Activated naive CD4-positive, alpha-beta T cell treated with anti-CD3 and anti-CD28 coated beads for 36 hours (primary cell): ENCODE measurements at regions of chr13 and their contacts with region 1.

Region 1: DNA sequence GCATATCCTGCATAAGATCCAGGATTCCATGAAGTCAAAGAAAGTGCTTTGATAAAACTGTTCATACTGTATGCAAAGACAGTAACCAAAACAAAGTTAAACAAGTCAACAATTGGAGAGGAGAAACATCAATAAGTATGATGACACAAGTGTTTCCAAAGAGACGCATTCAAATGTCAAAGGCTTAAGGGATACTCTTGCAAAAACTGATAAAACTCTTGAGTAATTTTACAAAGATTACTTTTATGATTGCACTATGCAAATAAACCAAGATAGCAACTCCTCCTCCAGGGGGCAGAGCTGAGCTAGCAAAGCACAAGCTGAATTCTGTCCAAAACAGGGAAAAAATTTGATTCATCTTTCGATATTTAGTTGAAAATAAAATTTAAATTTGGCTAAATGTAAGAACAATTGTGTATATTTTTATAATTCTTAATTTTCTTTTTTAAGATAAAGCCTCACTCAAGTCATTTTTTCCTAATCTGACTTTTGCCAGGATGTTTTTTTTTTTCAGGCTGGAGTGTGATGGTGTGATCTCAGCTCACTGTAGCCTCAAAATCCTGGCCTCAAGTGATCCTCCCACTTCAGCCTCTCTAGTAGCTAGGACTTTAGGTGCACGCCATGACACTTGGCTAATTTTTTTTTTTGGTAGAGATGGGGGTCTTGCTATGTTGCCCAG is 84.0 kb downstream of the MZT1 start:
- DNase-seq: peak; percentile 77
- H3K4me3 Mint-ChIP-seq: no peak overlapping the region
- H3K27ac Mint-ChIP-seq: no peak overlapping the region
- H3K4me1 Mint-ChIP-seq: no peaks in the 10 kb centered on the region
- H3K27me3 Mint-ChIP-seq: peaks cover 9% of the 10 kb centered on the region

Region 2: GRCh38 chr13:71912524-71912923 is 730.9 kb before region 1 on chr13:
- CTCF ChIA-PET with region 1: no interaction called
- intact Hi-C with region 1: no loop called
- DNase-seq: no peak
- H3K4me3 Mint-ChIP-seq: no peak overlapping the region
- H3K27ac Mint-ChIP-seq: no peak overlapping the region
- H3K4me1 Mint-ChIP-seq: no peaks in the 10 kb centered on the region
- H3K27me3 Mint-ChIP-seq: peaks cover 2% of the 10 kb centered on the region

Region 3: DNA sequence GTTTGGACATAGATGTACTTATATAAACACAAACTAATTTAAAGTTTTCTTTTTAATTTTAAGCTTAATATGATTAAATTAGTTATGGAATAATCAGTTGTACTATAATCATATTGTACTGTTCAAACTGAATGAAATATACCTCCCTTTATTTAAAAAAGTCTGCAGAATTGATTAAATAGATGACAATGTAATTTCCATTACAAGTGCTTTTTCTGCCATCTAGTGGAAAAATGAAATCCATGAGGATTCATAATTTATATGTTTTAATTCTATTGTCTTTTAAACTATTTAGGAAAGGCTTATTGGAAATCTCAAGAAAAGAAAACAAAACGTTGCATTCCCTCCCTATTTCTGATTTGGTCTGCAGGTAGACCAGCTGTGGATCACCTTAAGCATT is 53.1 kb after region 1 on chr13:
- CTCF ChIA-PET with region 1: interaction called, 5 read pairs
- intact Hi-C with region 1: loop called (anchors 5 kb)
- DNase-seq: no peak
- H3K4me3 Mint-ChIP-seq: no peak overlapping the region
- H3K27ac Mint-ChIP-seq: no peak overlapping the region
- H3K4me1 Mint-ChIP-seq: no peaks in the 10 kb centered on the region
- H3K27me3 Mint-ChIP-seq: peaks cover 8% of the 10 kb centered on the region